Heart left ventricle (tissue), 16 donors: ENCODE measurements at regions of chr6 and their contacts with region 1.

Region 1: GRCh38 chr6:67277312-67277711 is 1357.8 kb upstream of the ADGRB3 start:
- DNase-seq: no peak
- ATAC-seq: no peak
- H3K4me3 ChIP-seq: no peak overlapping the region
- H3K27ac ChIP-seq: no peak overlapping the region
- H3K4me1 ChIP-seq: no peaks in the 10 kb centered on the region
- H3K27me3 ChIP-seq: no peaks in the 10 kb centered on the region
- CTCF ChIP-seq: no peak
- POLR2A ChIP-seq: no peak

Region 2: DNA sequence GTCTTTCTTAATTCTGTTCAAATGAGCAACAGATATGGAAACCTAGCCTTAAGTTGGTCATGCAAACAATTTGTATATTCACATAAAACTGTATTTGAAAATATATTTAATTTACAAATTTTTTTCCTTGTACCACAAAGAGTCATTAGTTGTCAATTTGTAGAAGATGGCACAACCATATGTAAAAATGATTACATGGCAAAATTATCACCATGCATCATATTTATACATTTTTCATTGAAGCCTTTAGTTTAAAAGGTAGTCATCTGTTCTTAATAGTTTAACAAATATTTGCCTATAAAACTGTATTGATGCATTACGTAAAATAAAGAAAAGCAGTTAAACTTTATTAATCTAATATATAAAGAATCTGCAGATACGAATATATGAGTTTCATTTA is 51.0 kb after region 1 on chr6:
- intact Hi-C with region 1: loop called in 1 of 10 experiments (anchors 2 kb)
- DNase-seq: no peak
- ATAC-seq: no peak
- H3K4me3 ChIP-seq: no peak overlapping the region
- H3K27ac ChIP-seq: no peak overlapping the region
- H3K4me1 ChIP-seq: no peaks in the 10 kb centered on the region
- H3K27me3 ChIP-seq: no peaks in the 10 kb centered on the region
- CTCF ChIP-seq: no peak
- POLR2A ChIP-seq: no peak